PC-3 (cell line): ENCODE measurements at regions of chr1 and their contacts with region 1.

Region 1: DNA sequence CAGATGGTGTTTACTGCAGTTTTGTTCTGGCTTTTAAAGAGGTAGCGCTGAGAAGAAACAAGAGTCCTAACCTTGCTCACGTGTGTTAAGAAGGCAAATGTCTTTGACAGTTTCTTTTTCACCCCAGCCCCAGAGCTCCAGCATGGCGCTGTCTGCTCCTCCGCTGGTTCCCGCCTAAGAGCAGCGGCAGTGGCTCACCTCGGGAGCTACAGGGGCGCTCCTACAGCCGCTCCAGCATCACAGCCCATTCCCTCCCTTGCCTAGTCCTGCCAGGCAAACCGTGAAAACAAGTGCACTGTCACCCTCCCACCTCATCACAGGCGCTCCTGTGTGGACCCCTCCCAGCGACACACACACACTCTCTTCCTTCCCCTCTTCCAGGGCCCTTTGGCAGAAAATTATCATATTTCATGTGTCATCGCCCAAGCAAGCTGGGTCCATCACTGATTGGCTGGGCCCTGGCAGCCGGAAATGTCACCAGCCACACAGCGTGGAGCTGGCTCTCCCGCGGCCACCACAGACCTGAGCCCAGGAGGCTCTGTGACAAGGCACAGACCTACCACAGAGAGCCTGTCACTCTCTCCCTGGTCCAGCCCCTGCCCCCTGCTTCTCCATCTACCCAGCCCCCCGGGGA is 1.2 kb upstream of the HIVEP3 start:
- DNase-seq: no peak
- ATAC-seq: no peak
- H3K4me3 ChIP-seq: peak overlapping the region; percentile 23; the same call in 1 of the 2 replicates
- H3K27ac ChIP-seq: peak overlapping the region; percentile 77
- H3K4me1 ChIP-seq: peaks cover 63% of the 10 kb centered on the region
- H3K27me3 ChIP-seq: no peaks in the 10 kb centered on the region
- CTCF ChIP-seq: no peak

Region 2: DNA sequence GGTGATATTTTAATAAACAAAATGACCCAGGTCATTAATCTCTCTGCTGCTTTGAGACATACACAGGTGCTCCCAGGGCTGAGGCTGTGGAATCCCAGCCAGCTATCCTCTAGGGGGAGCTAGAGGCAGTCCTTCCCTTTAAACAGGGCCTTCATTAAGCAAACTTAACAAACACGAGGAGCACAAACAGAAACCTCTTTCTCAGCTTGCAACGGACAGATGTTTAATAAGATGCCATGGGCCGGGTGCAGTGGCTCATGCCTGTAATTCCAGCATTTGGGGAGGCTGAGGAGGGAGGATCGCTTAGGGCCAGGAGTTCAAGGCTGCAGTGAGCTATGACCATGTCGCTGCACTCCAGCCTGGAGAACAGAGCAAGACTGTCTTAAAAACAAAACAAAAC is 107.8 kb before region 1 on chr1:
- CTCF ChIA-PET with region 1: no interaction called
- POLR2A ChIA-PET with region 1: no interaction called
- intact Hi-C with region 1: loop called (anchors 5 kb)
- DNase-seq: peak; percentile 85
- ATAC-seq: peak; percentile 90
- H3K4me3 ChIP-seq: no peak overlapping the region
- H3K27ac ChIP-seq: peak overlapping the region; percentile 47
- H3K4me1 ChIP-seq: peaks cover 18% of the 10 kb centered on the region
- H3K27me3 ChIP-seq: no peaks in the 10 kb centered on the region
- CTCF ChIP-seq: peak; percentile 85

Region 3: GRCh38 chr1:41842993-41843755 is 76.7 kb before region 1 on chr1:
- CTCF ChIA-PET with region 1: no interaction called
- POLR2A ChIA-PET with region 1: no interaction called
- intact Hi-C with region 1: loop called (anchors 2 kb)
- DNase-seq: peak; percentile 68
- ATAC-seq: peak; percentile 19
- H3K4me3 ChIP-seq: no peak overlapping the region
- H3K27ac ChIP-seq: peak overlapping the region; percentile 67
- H3K4me1 ChIP-seq: peaks cover 71% of the 10 kb centered on the region
- H3K27me3 ChIP-seq: no peaks in the 10 kb centered on the region
- CTCF ChIP-seq: 0 out of 2 replicates have a peak, but pooled peaks have one; percentile 21

Region 4: GRCh38 chr1:41902125-41902524 is 17.8 kb before region 1 on chr1:
- CTCF ChIA-PET with region 1: interaction called, 10 read pairs
- POLR2A ChIA-PET with region 1: no interaction called
- intact Hi-C with region 1: no loop called
- DNase-seq: peak; percentile 59
- ATAC-seq: peak; percentile 16
- H3K4me3 ChIP-seq: no peak overlapping the region
- H3K27ac ChIP-seq: peak overlapping the region; percentile 80
- H3K4me1 ChIP-seq: peaks cover 52% of the 10 kb centered on the region
- H3K27me3 ChIP-seq: no peaks in the 10 kb centered on the region
- CTCF ChIP-seq: no peak